ENCODE measurements at regions of chr2 and their contacts with region 1.

Region 1: GRCh38 chr2:45778720-45779171 is 127.3 kb downstream of the PRKCE start:
- DNase-seq: no peak
- H3K4me3 ChIP-seq: no peak overlapping the region
- H3K27ac ChIP-seq: no peak overlapping the region
- H3K27me3 ChIP-seq: no peaks in the 10 kb centered on the region
- CTCF ChIP-seq: peak; percentile 68

Region 2: DNA sequence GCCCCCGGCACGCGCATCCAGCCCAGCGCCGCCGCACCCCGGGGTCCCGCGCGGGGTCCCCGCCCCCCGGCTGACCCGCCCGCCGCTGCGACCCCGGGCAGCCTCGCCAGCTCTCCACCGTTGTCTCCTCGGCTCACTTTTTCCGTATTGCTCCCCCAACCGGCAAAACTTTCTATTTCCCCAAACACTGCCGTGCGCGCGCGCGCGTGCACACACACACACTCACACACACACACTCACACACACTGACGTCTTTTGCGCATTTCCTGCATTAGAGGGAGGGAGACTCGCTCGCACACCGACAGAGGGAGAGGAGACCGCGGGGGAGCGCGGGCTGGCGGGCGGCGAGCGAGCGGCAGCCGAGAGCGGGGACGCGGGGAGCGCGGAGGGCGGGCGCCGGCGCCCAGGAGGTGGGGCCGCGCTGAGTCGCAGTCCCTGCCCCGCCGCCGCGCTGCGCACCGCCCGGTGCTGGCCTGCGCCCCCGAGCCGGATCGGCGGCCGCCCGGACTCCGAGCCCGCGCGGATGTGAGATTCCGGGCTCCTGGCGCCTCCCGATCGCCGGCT is 127.8 kb before region 1 on chr2:
- CTCF ChIA-PET with region 1: interaction called, 10 read pairs
- POLR2A ChIA-PET with region 1: interaction called, 4 read pairs
- DNase-seq: peak; percentile 97
- H3K4me3 ChIP-seq: peak overlapping the region; percentile 78
- H3K27ac ChIP-seq: peak overlapping the region; percentile 68
- H3K27me3 ChIP-seq: no peaks in the 10 kb centered on the region
- CTCF ChIP-seq: peak; percentile 51

Region 3: GRCh38 chr2:45797451-45798230 is 18.9 kb after region 1 on chr2:
- CTCF ChIA-PET with region 1: interaction called, 20 read pairs
- POLR2A ChIA-PET with region 1: no interaction called
- DNase-seq: no peak
- H3K4me3 ChIP-seq: no peak overlapping the region
- H3K27ac ChIP-seq: no peak overlapping the region
- H3K27me3 ChIP-seq: no peaks in the 10 kb centered on the region
- CTCF ChIP-seq: no peak

Region 4: GRCh38 chr2:46097714-46098480 is 319.2 kb after region 1 on chr2:
- CTCF ChIA-PET with region 1: no interaction called
- POLR2A ChIA-PET with region 1: no interaction called
- DNase-seq: peak; percentile 97
- H3K4me3 ChIP-seq: no peak overlapping the region
- H3K27ac ChIP-seq: peak overlapping the region; percentile 99
- H3K27me3 ChIP-seq: no peaks in the 10 kb centered on the region
- CTCF ChIP-seq: no peak